Heart right ventricle (tissue), 16 donors: ENCODE measurements at regions of chr1 and their contacts with region 1.

Region 1: DNA sequence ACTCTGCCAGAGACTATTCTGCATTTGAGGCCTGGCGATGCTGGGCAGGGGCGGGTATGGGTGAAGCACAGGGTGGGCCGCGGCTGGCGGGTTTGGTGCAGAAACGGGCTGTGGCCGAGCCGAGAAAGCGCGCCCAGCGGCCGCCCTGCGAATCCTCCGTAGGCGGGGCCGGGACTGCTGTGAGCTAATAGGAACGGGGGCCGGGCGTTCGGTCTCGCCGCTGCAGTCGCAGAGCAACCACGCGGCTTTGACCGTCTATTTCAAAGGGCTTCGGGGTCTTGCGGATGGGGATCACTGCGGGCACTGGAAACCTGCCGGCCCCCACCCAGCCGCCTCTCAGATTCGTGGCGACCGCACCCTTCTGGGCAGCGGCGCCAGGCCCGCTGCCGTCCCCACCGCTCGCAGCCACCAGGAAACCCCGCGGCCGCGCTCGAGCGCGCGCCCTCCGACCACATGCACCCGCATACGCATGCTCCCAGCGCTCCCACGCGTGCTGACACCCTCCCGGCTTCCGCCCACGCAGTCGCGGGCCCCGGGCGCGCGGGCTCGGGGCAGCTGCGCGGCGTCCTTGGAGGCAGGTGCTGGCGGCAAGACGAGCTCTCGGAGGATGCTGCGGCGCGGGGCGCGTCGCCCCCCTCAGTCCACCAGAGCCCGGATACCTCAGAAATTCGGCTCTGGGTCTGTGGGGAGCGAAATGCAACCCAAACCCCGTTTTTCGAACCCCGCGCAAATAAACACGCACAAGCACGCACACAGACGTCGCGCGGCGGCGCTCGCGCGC is 32.6 kb downstream of the DNTTIP2 start:
- DNase-seq: peak; percentile 89
- ATAC-seq: peak; percentile 64 to 81 (median 76)
- H3K4me3 ChIP-seq: peak overlapping the region; percentile 69 to 93 (median 86)
- H3K27ac ChIP-seq: peak overlapping the region; percentile 86 to 98 (median 96)
- H3K4me1 ChIP-seq: peaks cover 4 to 38% (median 31%) of the 10 kb centered on the region in 9 donors
- H3K27me3 ChIP-seq: no peaks in the 10 kb centered on the region
- CTCF ChIP-seq: peak in 7 of 9 donors; percentile 17 to 57 (median 40)

Region 2: GRCh38 chr1:93345633-93346420 is 500.6 kb before region 1 on chr1 and contains the start of gene DR1:
- intact Hi-C with region 1: loop called in 2 of 10 experiments (anchors 5 kb)
- DNase-seq: peak; percentile 94 to 95
- ATAC-seq: peak; percentile 97 to 99 (median 98)
- H3K4me3 ChIP-seq: peak within 1 kb of the TSS; percentile 80 to 96 (median 92)
- H3K27ac ChIP-seq: peak within 1 kb of the TSS; percentile 89 to 98 (median 94)
- H3K4me1 ChIP-seq: peaks cover 0 to 54% (median 38%) of the 10 kb centered on the region in 9 donors
- H3K27me3 ChIP-seq: no peaks in the 10 kb centered on the region
- CTCF ChIP-seq: no peak
- total RNA-seq, gene DR1: 33.0 to 40.8 (median 37.5) TPM

Region 3: GRCh38 chr1:93804412-93804811 is 42.0 kb before region 1 on chr1:
- intact Hi-C with region 1: loop called in 1 of 10 experiments (anchors 5 kb)
- DNase-seq: peak in 1 of 2 donors; percentile 23
- ATAC-seq: peak; percentile 91 to 98 (median 94)
- H3K4me3 ChIP-seq: no peak overlapping the region
- H3K27ac ChIP-seq: peak overlapping the region in 7 of 10 donors; percentile 13 to 60 (median 46)
- H3K4me1 ChIP-seq: peaks cover 0 to 21% (median 13%) of the 10 kb centered on the region in 9 donors
- H3K27me3 ChIP-seq: no peaks in the 10 kb centered on the region
- CTCF ChIP-seq: no peak